Naive thymus-derived CD4-positive, alpha-beta T cell (primary cell): ENCODE measurements at regions of chr14 and their contacts with region 1.

Region 1: GRCh38 chr14:99982537-99983250 is 82.5 kb upstream of the EVL start:
- DNase-seq: peak; percentile 35 to 77 (median 72)
- ATAC-seq: peak; percentile 100
- H3K4me3 ChIP-seq: no peak overlapping the region
- H3K4me3 Mint-ChIP-seq: no peak overlapping the region
- H3K27ac ChIP-seq: no peak overlapping the region
- H3K27ac Mint-ChIP-seq: peak overlapping the region in 6 of 9 donors; percentile 3 to 85 (median 68)
- H3K4me1 ChIP-seq: peaks cover 0 to 15% of the 10 kb centered on the region in 2 donors
- H3K4me1 Mint-ChIP-seq: peaks cover 5 to 21% (median 19%) of the 10 kb centered on the region in 7 donors
- H3K27me3 ChIP-seq: no peaks in the 10 kb centered on the region
- H3K27me3 Mint-ChIP-seq: no peaks in the 10 kb centered on the region

Region 2: DNA sequence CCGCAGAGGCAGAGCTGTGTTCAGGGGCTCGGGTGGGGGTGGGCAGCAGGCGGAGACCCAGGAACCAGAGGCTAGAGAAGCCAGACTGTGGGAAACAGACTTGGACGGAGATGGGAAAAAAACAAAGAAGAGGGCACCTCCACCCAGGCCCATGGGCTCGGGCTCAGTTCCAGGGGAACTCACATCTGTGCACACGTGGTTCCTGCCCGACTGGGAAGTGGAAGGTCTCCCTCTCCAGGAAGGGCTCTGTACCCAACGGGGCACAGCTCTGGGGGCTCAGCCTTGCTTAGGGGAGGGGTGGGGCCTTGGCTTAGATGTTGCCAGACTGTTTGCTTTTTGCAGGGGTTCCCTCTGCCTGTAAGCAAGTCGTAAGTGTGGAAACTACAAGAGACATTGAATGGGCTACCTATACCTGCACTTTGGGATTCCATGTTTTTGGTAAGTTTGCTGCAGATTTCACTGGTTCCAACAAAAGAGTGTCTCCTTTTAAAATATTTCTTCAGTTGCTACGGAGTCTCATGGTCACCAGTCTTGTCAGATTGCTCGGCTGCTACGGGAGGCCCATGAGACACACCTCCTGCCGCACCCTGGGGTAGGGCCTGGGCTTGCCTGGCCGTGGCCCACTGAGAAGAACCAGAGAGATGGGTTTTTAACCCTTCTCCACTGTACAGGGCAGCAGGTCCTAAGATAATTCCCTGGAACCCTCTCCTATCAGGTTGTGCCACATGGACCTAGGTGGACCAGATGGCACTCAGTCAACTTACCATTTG is 45.0 kb before region 1 on chr14:
- CTCF ChIA-PET with region 1: no interaction called
- POLR2A ChIA-PET with region 1: no interaction called
- intact Hi-C with region 1: no loop called
- DNase-seq: no peak
- ATAC-seq: no peak
- H3K4me3 ChIP-seq: no peak overlapping the region
- H3K4me3 Mint-ChIP-seq: no peak overlapping the region
- H3K27ac ChIP-seq: no peak overlapping the region
- H3K27ac Mint-ChIP-seq: no peak overlapping the region
- H3K4me1 ChIP-seq: no peaks in the 10 kb centered on the region
- H3K4me1 Mint-ChIP-seq: no peaks in the 10 kb centered on the region
- H3K27me3 ChIP-seq: no peaks in the 10 kb centered on the region
- H3K27me3 Mint-ChIP-seq: peaks cover 0 to 6% (median 0%) of the 10 kb centered on the region in 5 donors

Region 3: DNA sequence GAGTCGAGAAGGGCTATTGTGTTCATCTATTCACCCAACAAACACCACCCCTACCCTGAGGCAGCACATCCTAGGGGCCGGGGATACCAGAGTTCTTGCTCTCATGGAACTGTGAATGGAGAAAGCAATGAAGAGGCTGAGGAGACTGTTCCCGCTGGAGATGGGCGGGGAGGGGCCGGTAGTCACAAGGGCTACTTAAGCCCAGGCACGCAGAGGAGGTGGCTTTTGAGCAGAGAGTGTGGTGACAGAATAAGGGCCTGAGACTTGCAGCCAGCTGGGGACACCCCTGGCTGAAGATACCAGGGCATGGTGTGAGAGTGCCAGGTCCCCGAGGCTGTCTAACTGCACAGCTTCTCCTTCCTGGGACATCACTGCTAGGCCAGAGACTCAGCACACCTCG is 31.6 kb before region 1 on chr14:
- CTCF ChIA-PET with region 1: no interaction called
- POLR2A ChIA-PET with region 1: no interaction called
- intact Hi-C with region 1: no loop called
- DNase-seq: no peak
- ATAC-seq: no peak
- H3K4me3 ChIP-seq: no peak overlapping the region
- H3K4me3 Mint-ChIP-seq: no peak overlapping the region
- H3K27ac ChIP-seq: no peak overlapping the region
- H3K27ac Mint-ChIP-seq: no peak overlapping the region
- H3K4me1 ChIP-seq: peaks cover 4 to 6% of the 10 kb centered on the region in 2 donors
- H3K4me1 Mint-ChIP-seq: peaks cover 3 to 14% (median 5%) of the 10 kb centered on the region in 7 donors
- H3K27me3 ChIP-seq: peaks cover 0 to 8% of the 10 kb centered on the region in 2 donors
- H3K27me3 Mint-ChIP-seq: peaks cover 5 to 22% (median 17%) of the 10 kb centered on the region in 5 donors

Region 4: GRCh38 chr14:99971087-99971940 is 11.4 kb before region 1 on chr14:
- CTCF ChIA-PET with region 1: interaction called, 8 read pairs
- POLR2A ChIA-PET with region 1: no interaction called
- intact Hi-C with region 1: loop called in 1 of 2 experiments (anchors 1 kb)
- DNase-seq: peak; percentile 69 to 87 (median 81)
- ATAC-seq: peak; percentile 95
- H3K4me3 ChIP-seq: peak overlapping the region; percentile 53
- H3K4me3 Mint-ChIP-seq: peak overlapping the region; percentile 43 to 93 (median 76)
- H3K27ac ChIP-seq: peak overlapping the region; percentile 58
- H3K27ac Mint-ChIP-seq: peak overlapping the region in 4 of 9 donors; percentile 21 to 87 (median 48)
- H3K4me1 ChIP-seq: no peaks in the 10 kb centered on the region
- H3K4me1 Mint-ChIP-seq: peaks cover 7 to 21% (median 15%) of the 10 kb centered on the region in 7 donors
- H3K27me3 ChIP-seq: no peaks in the 10 kb centered on the region
- H3K27me3 Mint-ChIP-seq: peaks cover 0 to 33% (median 7%) of the 10 kb centered on the region in 5 donors

Region 5: DNA sequence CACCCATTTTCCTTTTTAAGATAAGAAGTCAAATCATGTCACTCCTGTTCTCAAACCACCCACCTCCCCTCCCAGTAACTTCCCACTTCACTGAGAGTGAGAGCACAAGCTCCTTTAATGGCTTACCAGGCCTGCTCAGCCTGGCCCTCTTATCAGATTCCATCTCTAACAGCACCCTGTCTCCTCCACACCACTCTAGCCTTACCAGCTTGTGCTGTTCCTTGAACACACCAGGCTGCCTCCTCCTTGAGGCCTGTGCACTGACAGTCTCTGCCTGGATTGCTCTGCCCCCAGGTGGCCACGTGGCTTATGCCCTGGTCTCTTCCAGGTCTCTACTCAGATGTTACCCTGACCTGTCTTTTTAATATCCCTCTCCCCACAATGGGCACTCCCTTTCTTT is 42.4 kb after region 1 on chr14:
- CTCF ChIA-PET with region 1: interaction called, 4 read pairs
- POLR2A ChIA-PET with region 1: no interaction called
- intact Hi-C with region 1: loop called in 1 of 2 experiments (anchors 2 kb)
- DNase-seq: peak in 6 of 9 donors; percentile 15 to 22 (median 16)
- ATAC-seq: peak; percentile 59
- H3K4me3 ChIP-seq: no peak overlapping the region
- H3K4me3 Mint-ChIP-seq: no peak overlapping the region
- H3K27ac ChIP-seq: no peak overlapping the region
- H3K27ac Mint-ChIP-seq: peak overlapping the region in 3 of 9 donors; percentile 5 to 78 (median 15)
- H3K4me1 ChIP-seq: no peaks in the 10 kb centered on the region
- H3K4me1 Mint-ChIP-seq: peaks cover 6 to 13% (median 10%) of the 10 kb centered on the region in 7 donors
- H3K27me3 ChIP-seq: no peaks in the 10 kb centered on the region
- H3K27me3 Mint-ChIP-seq: no peaks in the 10 kb centered on the region

Region 6: GRCh38 chr14:100108042-100108825 is 125.5 kb after region 1 on chr14:
- CTCF ChIA-PET with region 1: interaction called, 16 read pairs
- POLR2A ChIA-PET with region 1: interaction called, 5 read pairs
- intact Hi-C with region 1: loop called (anchors 1 kb)
- DNase-seq: peak; percentile 76 to 88 (median 84)
- ATAC-seq: peak; percentile 80
- H3K4me3 ChIP-seq: no peak overlapping the region
- H3K4me3 Mint-ChIP-seq: peak overlapping the region; percentile 13 to 93 (median 64)
- H3K27ac ChIP-seq: peak overlapping the region; percentile 83
- H3K27ac Mint-ChIP-seq: peak overlapping the region; percentile 89 to 98 (median 96)
- H3K4me1 ChIP-seq: peaks cover 49 to 74% of the 10 kb centered on the region in 2 donors
- H3K4me1 Mint-ChIP-seq: peaks cover 72 to 91% (median 82%) of the 10 kb centered on the region in 7 donors
- H3K27me3 ChIP-seq: no peaks in the 10 kb centered on the region
- H3K27me3 Mint-ChIP-seq: no peaks in the 10 kb centered on the region

Region 7: DNA sequence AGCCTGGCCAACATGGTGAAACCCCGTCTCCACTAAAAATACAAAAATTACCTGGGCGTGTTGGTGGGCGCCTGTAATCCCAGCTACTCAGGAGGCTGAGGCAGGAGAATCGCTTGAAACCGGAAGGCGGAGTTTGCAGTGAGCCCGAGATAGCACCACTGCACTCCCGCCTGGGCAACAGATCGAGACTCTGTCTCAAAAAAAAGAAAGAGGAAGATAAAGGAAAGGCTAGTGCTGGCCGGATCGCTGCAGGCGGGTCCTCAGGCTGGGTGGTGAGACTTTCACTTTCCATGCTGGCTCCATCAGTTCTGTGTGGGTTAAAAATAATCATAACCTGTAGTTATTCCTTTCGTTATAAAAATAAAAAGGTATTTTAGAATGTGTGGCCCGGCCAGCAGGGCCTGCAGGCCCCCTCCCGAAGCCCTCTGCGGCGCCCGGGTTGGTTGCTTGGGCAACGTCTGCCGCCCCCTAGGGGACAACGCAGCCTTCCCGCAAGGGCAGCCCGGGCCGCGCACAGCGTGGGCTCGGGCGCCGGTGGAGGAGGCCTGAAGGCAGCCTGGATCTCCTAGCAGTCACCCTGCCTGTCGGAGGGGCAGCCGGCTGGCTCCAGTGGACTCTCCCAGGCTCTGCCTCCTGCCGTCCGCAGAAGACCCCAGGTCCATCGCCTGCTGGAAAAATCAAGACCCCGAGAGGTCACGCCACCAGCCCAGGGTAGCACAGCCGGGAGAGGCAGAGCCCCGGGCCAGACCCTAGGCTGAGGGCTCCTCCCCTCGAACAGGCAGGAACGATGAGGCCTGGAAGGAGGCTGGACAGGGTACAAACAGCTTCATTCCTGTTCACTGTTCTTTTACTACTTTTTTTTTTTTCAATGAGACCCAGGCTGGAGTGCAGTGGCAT is 335.5 kb after region 1 on chr14:
- CTCF ChIA-PET with region 1: no interaction called
- POLR2A ChIA-PET with region 1: no interaction called
- intact Hi-C with region 1: loop called in 1 of 2 experiments (anchors 1 kb)
- DNase-seq: peak; percentile 38 to 72 (median 58)
- ATAC-seq: peak; percentile 97
- H3K4me3 ChIP-seq: peak overlapping the region; percentile 53
- H3K4me3 Mint-ChIP-seq: peak overlapping the region; percentile 45 to 79 (median 72)
- H3K27ac ChIP-seq: no peak overlapping the region
- H3K27ac Mint-ChIP-seq: peak overlapping the region in 1 of 9 donors; percentile 9
- H3K4me1 ChIP-seq: no peaks in the 10 kb centered on the region
- H3K4me1 Mint-ChIP-seq: peaks cover 4 to 7% (median 5%) of the 10 kb centered on the region in 7 donors
- H3K27me3 ChIP-seq: no peaks in the 10 kb centered on the region
- H3K27me3 Mint-ChIP-seq: peaks cover 0 to 5% (median 0%) of the 10 kb centered on the region in 5 donors

Region 8: GRCh38 chr14:101559624-101560533 is 1577.2 kb after region 1 on chr14:
- CTCF ChIA-PET with region 1: no interaction called
- POLR2A ChIA-PET with region 1: no interaction called
- intact Hi-C with region 1: no loop called
- DNase-seq: no peak
- ATAC-seq: no peak
- H3K4me3 ChIP-seq: no peak overlapping the region
- H3K4me3 Mint-ChIP-seq: peak overlapping the region in 1 of 10 donors; percentile 16
- H3K27ac ChIP-seq: no peak overlapping the region
- H3K27ac Mint-ChIP-seq: no peak overlapping the region
- H3K4me1 ChIP-seq: no peaks in the 10 kb centered on the region
- H3K4me1 Mint-ChIP-seq: peaks cover 0 to 10% (median 6%) of the 10 kb centered on the region in 7 donors
- H3K27me3 ChIP-seq: peaks cover 0 to 3% of the 10 kb centered on the region in 2 donors
- H3K27me3 Mint-ChIP-seq: peaks cover 40 to 61% (median 51%) of the 10 kb centered on the region in 5 donors